Right ventricle myocardium inferior (tissue), 1 donor: ENCODE measurements at regions of chr18 and their contacts with region 1.

Region 1: DNA sequence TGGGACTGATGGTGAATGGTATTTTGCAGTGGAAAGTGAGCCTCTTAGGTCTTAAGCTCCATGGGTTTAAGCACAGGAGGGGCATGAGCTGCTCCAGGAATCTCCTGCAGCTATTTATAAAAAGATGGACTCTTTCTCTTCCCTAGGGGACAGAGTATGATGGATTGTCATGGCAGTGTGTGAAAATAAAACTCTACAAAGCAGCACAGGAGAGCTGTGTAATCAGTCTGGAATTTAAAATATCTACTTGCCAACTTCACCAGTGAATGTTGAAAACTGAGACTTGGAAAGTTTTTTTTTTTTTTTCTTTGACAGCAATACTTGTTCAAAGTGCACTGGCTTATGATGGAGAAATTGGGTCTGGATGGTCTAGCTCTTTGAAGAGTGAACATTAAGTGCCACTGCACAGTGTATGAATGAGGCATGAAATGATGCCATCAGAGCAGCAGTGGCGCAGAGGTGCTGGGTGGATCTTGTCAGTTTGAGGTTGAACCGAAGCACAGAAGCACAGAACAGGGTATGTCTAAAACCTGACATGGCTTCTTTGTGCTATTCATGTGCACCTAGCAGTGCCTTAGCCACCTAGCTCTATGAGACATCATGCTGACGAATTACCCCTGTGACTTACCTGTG is 245.4 kb downstream of the PTPRM start:
- DNase-seq: no peak
- ATAC-seq: peak; percentile 79

Region 2: DNA sequence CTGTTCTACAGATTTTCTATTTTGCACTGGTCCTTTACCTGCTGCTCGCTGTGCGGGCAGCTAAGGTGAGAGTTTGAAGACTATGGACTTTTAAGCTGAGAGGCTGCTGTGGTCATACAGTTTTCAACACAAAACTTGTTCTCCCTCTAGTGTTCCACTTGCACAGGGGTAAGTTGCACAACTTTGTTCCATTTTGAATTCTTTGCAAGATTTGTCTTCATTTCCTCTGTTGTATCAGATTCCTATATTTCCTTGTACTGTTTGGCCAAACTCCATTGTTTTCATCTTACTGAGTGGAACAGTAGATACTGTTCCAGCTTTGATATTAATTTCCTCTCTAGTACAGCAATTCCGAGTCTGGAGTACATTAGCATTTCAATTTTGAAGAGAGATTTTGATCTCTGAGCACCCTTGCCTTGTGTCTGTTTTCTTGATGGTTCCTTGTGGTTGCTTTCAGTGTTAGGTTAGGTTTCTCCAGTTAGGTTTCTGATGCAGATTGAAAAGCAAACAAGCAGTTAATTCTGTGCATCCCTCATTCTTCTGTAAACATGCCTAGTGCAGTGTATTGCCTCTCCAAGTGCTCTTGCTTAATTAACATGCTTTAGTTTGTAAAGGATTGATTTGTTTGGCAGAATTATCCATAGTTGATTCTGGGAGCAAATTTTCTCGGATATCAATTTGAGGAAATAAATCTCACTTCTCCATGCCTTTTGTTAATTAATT is 56.6 kb before region 1 on chr18:
- intact Hi-C with region 1: loop called (anchors 10 kb)
- DNase-seq: no peak
- ATAC-seq: peak; percentile 37

Region 3: DNA sequence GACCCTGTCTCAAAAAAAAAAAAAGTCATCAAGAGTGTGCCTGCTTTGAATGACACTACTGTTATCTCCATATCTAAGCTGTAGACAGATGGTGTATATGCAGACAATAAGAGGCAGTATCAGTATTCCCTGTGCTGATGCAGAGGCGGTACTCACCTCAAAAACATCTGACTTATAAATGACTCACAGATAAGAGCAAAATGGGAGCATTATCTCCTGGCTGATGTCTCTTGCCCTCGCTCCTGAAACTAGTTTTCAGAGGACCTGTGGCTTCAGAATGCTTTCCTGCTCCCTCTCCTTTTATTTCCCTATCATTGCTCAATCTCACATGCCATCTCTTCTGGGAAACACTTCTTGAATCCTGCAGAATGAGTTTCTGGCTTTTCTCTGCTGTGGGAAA is 44.2 kb after region 1 on chr18:
- intact Hi-C with region 1: loop called (anchors 5 kb)
- DNase-seq: no peak
- ATAC-seq: no peak